ENCODE measurements at regions of chr1 and their contacts with region 1.

Region 1: DNA sequence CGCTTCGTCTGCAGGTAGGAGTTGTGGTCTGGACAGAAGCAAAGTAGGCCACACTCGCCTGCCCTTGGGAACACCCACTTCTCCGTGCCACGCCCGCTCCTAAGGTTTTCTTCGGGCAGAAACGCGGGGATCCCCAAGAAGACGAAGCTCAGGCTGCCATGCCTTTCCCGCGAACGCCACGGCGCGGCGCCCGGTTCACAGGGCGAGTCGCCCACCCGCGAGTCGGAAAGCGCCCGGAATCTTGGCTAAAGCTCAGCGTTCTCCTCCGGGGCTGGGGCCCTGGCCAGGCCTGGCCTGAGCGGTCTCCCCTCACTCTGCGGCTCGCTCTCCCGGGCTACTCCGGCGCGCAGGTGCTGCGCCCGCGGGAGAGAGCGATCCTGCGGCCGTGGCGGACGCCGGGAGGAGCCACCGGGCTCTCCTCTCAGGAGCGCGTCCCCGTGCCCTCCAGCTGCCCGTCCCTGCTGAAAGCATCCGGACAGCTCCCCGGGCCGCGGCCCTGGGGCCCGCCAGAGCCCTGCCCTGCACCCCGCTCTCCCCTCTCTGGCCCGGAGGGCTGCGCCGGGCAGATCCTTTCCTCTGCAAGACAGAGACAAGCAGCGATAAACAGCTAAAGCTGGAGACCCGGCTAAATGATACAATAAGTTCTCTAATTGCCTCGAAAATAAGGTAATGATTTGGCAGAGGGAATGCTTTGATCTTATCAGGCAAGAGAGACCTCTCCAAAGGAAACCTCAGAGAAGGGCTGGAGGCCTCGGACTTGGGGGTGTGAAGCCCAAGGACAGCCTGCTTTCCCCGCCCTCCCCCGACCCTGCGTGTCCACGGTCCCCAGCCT is 6.7 kb upstream of the WNT2B start:
- DNase-seq: peak; percentile 77
- ATAC-seq: peak; percentile 79
- H3K4me3 Mint-ChIP-seq: peak overlapping the region; percentile 26
- H3K27ac Mint-ChIP-seq: no peak overlapping the region
- H3K4me1 Mint-ChIP-seq: peaks cover 4% of the 10 kb centered on the region
- H3K27me3 Mint-ChIP-seq: peaks cover 49% of the 10 kb centered on the region

Region 2: DNA sequence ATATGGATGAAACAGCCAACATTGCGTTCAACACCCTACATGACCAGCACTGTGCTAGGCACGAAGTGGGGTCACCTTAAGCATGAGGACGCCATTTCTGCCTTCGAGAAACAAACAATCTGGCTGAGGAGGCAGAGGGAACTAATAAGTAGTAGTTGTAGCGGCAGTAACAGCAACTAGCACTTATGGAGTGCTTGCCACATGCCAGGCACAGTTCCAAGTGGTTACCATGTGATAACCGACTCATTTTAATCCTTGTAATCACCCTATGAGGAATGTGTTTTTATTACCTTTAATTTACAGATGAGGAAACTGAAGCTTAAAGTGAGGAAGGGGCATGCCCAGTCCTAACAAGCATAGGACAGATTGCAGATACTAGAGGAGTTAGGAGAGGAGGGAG is 546.3 kb before region 1 on chr1:
- CTCF ChIA-PET with region 1: no interaction called
- POLR2A ChIA-PET with region 1: no interaction called
- intact Hi-C with region 1: no loop called
- DNase-seq: no peak
- ATAC-seq: no peak
- H3K4me3 Mint-ChIP-seq: no peak overlapping the region
- H3K27ac Mint-ChIP-seq: no peak overlapping the region
- H3K4me1 Mint-ChIP-seq: no peaks in the 10 kb centered on the region
- H3K27me3 Mint-ChIP-seq: peaks cover 4% of the 10 kb centered on the region

Region 3: DNA sequence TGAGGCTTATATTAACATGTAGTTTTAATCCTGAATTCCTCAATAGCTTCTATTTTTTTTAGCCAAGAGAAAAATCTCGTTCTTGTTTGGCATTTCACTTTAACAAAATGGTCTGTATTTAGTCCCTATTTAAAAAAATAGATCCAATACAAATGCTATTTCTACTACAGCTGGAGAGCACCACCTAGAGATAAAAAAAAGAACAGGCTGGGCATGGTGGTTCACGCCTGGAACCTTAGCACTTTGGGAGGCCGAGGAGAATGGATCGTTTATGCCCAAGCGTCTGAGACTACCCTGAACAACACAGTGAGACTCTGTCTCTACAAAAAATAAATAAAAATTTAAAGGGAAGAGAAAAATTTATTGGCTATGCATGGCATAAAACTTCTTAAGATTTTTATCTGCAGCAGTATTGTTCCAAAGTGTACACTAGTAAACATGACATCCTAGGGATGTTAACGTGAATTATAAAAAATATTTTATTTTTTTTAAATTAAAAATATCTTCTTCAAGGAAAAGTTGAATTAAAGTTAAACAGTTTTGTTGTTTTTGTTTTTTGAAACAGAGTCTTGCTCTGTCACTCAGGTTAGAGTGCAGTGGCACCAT is 112.5 kb after region 1 on chr1:
- CTCF ChIA-PET with region 1: interaction called, 7 read pairs
- POLR2A ChIA-PET with region 1: no interaction called
- intact Hi-C with region 1: loop called (anchors 1 to 5 kb)
- DNase-seq: peak; percentile 33
- ATAC-seq: no peak
- H3K4me3 Mint-ChIP-seq: no peak overlapping the region
- H3K27ac Mint-ChIP-seq: no peak overlapping the region
- H3K4me1 Mint-ChIP-seq: peaks cover 9% of the 10 kb centered on the region
- H3K27me3 Mint-ChIP-seq: no peaks in the 10 kb centered on the region

Measured in activated CD4-positive, alpha-beta T cell treated with anti-CD3 and anti-CD28 coated beads for 36 hours (primary cell).